CD4-positive, alpha-beta T cell (primary cell): ENCODE measurements at regions of chr4 and their contacts with region 1.

Region 1: DNA sequence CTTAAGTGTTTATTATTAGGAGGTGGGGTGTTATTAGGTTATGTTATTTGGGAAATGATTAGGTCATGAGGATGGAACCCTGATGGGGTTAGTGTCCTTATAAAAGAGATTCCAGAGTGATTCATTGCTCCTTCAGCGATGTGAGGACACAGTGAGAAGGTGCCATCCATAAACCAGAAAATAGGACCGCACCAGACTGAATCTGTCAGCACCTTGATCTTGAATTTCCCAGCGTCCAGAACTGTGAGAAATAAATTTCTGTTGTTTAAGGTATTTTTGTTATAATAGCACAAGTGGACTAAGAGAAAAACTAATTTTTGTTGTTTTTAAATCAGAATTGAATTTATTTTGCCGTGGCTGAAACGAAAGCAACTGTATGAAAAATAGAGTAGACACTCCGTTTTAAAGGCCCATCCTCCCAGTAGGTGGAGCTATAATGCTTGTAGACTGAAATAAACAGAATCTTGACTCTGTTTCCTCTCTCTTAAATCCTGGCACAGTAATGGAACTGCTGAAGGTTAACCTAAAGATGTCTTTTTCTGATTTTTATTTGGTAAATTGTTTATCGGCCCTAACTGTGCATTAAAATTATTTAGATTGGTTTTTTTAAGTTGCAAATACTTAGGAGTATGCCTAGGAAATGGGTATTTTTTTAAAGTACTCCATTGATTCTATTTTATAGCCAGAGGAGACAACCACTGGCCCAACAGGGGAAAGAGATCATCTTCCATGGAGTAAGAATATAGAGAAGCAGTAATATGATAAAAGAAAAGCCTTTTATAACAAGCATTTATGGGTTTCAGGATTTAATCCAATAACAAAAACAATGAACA is 133.2 kb upstream of the ADAMTS3 start:
- DNase-seq: peak in 5 of 14 experiments; percentile 1 to 52 (median 50)
- ATAC-seq: no peak
- H3K4me3 ChIP-seq: peak overlapping the region; percentile 40
- H3K4me3 Mint-ChIP-seq: peak overlapping the region; percentile 83
- H3K27ac ChIP-seq: no peak overlapping the region
- H3K27ac Mint-ChIP-seq: no peak overlapping the region
- H3K4me1 ChIP-seq: no peaks in the 10 kb centered on the region
- H3K4me1 Mint-ChIP-seq: no peaks in the 10 kb centered on the region
- H3K27me3 ChIP-seq: no peaks in the 10 kb centered on the region
- H3K27me3 Mint-ChIP-seq: peaks cover 2% of the 10 kb centered on the region
- CTCF ChIP-seq: peak; percentile 50

Region 2: GRCh38 chr4:72567821-72568675 is 134.2 kb before region 1 on chr4:
- CTCF ChIA-PET with region 1: no interaction called
- POLR2A ChIA-PET with region 1: no interaction called
- intact Hi-C with region 1: no loop called
- DNase-seq: peak in 2 of 14 experiments; percentile 16 to 18
- ATAC-seq: no peak
- H3K4me3 ChIP-seq: peak overlapping the region; percentile 26
- H3K4me3 Mint-ChIP-seq: peak overlapping the region; percentile 50
- H3K27ac ChIP-seq: no peak overlapping the region
- H3K27ac Mint-ChIP-seq: no peak overlapping the region
- H3K4me1 ChIP-seq: peaks cover 16% of the 10 kb centered on the region
- H3K4me1 Mint-ChIP-seq: peaks cover 15% of the 10 kb centered on the region
- H3K27me3 ChIP-seq: peaks cover 33 to 52% of the 10 kb centered on the region in 2 experiments
- H3K27me3 Mint-ChIP-seq: peaks cover 75% of the 10 kb centered on the region
- CTCF ChIP-seq: no peak

Region 3: GRCh38 chr4:73019462-73020047 is 317.4 kb after region 1 on chr4:
- CTCF ChIA-PET with region 1: no interaction called
- POLR2A ChIA-PET with region 1: no interaction called
- intact Hi-C with region 1: loop called (anchors 5 to 10 kb)
- DNase-seq: peak in 4 of 14 experiments; percentile 5 to 45 (median 40)
- ATAC-seq: no peak
- H3K4me3 ChIP-seq: no peak overlapping the region
- H3K4me3 Mint-ChIP-seq: no peak overlapping the region
- H3K27ac ChIP-seq: no peak overlapping the region
- H3K27ac Mint-ChIP-seq: no peak overlapping the region
- H3K4me1 ChIP-seq: no peaks in the 10 kb centered on the region
- H3K4me1 Mint-ChIP-seq: no peaks in the 10 kb centered on the region
- H3K27me3 ChIP-seq: peaks cover 0 to 2% of the 10 kb centered on the region in 2 experiments
- H3K27me3 Mint-ChIP-seq: no peaks in the 10 kb centered on the region
- CTCF ChIP-seq: peak; percentile 80

Region 4: GRCh38 chr4:73434311-73434710 is 732.1 kb after region 1 on chr4:
- CTCF ChIA-PET with region 1: no interaction called
- POLR2A ChIA-PET with region 1: no interaction called
- intact Hi-C with region 1: loop called in 1 of 2 experiments (anchors 10 kb)
- DNase-seq: no peak
- ATAC-seq: no peak
- H3K4me3 ChIP-seq: no peak overlapping the region
- H3K4me3 Mint-ChIP-seq: no peak overlapping the region
- H3K27ac ChIP-seq: no peak overlapping the region
- H3K27ac Mint-ChIP-seq: no peak overlapping the region
- H3K4me1 ChIP-seq: no peaks in the 10 kb centered on the region
- H3K4me1 Mint-ChIP-seq: no peaks in the 10 kb centered on the region
- H3K27me3 ChIP-seq: peaks cover 0 to 5% of the 10 kb centered on the region in 2 experiments
- H3K27me3 Mint-ChIP-seq: peaks cover 11% of the 10 kb centered on the region
- CTCF ChIP-seq: peak; percentile 35

Region 5: GRCh38 chr4:73446336-73446938 is 744.2 kb after region 1 on chr4:
- CTCF ChIA-PET with region 1: no interaction called
- POLR2A ChIA-PET with region 1: no interaction called
- intact Hi-C with region 1: loop called in 1 of 2 experiments (anchors 2 kb)
- DNase-seq: peak in 3 of 14 experiments; percentile 35 to 41 (median 37)
- ATAC-seq: peak; percentile 92
- H3K4me3 ChIP-seq: no peak overlapping the region
- H3K4me3 Mint-ChIP-seq: no peak overlapping the region
- H3K27ac ChIP-seq: no peak overlapping the region
- H3K27ac Mint-ChIP-seq: no peak overlapping the region
- H3K4me1 ChIP-seq: no peaks in the 10 kb centered on the region
- H3K4me1 Mint-ChIP-seq: no peaks in the 10 kb centered on the region
- H3K27me3 ChIP-seq: no peaks in the 10 kb centered on the region
- H3K27me3 Mint-ChIP-seq: peaks cover 23% of the 10 kb centered on the region
- CTCF ChIP-seq: peak; percentile 71